Right ventricle myocardium superior (tissue), 1 donor: ENCODE measurements at regions of chr7 and their contacts with region 1.

Region 1: GRCh38 chr7:138015096-138015495 is 13.2 kb upstream of the CREB3L2 start:
- DNase-seq: no peak
- ATAC-seq: no peak

Region 2: DNA sequence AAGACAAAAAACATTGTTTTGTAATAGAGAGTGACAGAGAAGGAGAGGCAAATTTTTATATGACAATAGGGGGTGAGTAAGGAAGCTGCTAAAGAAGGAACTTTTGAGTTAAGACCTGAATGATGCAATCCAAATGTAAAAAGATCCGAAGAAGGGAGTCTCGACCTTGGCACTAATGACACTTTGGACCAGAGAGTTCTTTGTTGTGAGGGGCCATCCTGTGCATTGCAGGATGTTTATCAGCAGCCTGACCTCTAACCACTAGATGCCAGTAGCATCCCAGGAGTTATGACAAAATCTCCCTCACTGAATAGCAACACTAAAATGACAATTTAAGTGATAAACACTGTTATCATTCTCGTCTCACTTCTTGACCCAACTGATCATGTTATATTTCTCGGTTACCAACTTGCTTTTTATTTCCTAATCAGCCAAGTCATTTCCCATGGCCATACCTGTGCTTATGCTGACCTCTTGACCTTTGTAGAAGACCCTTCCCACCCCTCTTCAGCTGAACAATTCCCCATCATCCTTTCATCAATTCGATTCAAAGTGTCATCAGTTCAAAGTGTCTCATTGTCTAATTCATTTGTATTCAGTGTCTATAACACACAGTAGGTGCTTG is 198.3 kb before region 1 on chr7:
- intact Hi-C with region 1: loop called (anchors 10 kb)
- DNase-seq: no peak
- ATAC-seq: no peak